Activated T-helper 2 cell treated with anti-CD3 and anti-CD28 coated beads, Interferon-gamma antibody, Interleukin-2, Interleukin-4, amounts not matched to agents 10 μg/mL and 5 μg/mL and 100 μg/mL, durations not matched to agents 14 hours and 24 hours and 36 hours (primary cell): ENCODE measurements at regions of chr4 and their contacts with region 1.

Region 1: GRCh38 chr4:145557720-145558119 is 61.5 kb upstream of the MMAA start:
- DNase-seq: peak; percentile 42
- H3K4me3 Mint-ChIP-seq: no peak overlapping the region
- H3K27ac Mint-ChIP-seq: no peak overlapping the region
- H3K4me1 Mint-ChIP-seq: peaks cover 1% of the 10 kb centered on the region
- H3K27me3 Mint-ChIP-seq: no peaks in the 10 kb centered on the region

Region 2: GRCh38 chr4:145216535-145216934 is 341.2 kb before region 1 on chr4:
- intact Hi-C with region 1: loop called (anchors 5 kb)
- DNase-seq: no peak
- H3K4me3 Mint-ChIP-seq: no peak overlapping the region
- H3K27ac Mint-ChIP-seq: no peak overlapping the region
- H3K4me1 Mint-ChIP-seq: no peaks in the 10 kb centered on the region
- H3K27me3 Mint-ChIP-seq: peaks cover 17% of the 10 kb centered on the region

Region 3: GRCh38 chr4:145234091-145234706 is 323.5 kb before region 1 on chr4:
- intact Hi-C with region 1: loop called (anchors 1 kb)
- DNase-seq: peak; percentile 14
- H3K4me3 Mint-ChIP-seq: no peak overlapping the region
- H3K27ac Mint-ChIP-seq: no peak overlapping the region
- H3K4me1 Mint-ChIP-seq: no peaks in the 10 kb centered on the region
- H3K27me3 Mint-ChIP-seq: peaks cover 17% of the 10 kb centered on the region

Region 4: GRCh38 chr4:145545538-145546174 is 12.1 kb before region 1 on chr4:
- intact Hi-C with region 1: no loop called
- DNase-seq: no peak
- H3K4me3 Mint-ChIP-seq: no peak overlapping the region
- H3K27ac Mint-ChIP-seq: no peak overlapping the region
- H3K4me1 Mint-ChIP-seq: peaks cover 1% of the 10 kb centered on the region
- H3K27me3 Mint-ChIP-seq: no peaks in the 10 kb centered on the region

Region 5: GRCh38 chr4:145609481-145610427 is 52.0 kb after region 1 on chr4:
- intact Hi-C with region 1: loop called (anchors 5 kb)
- DNase-seq: peak; percentile 44
- H3K4me3 Mint-ChIP-seq: no peak overlapping the region
- H3K27ac Mint-ChIP-seq: no peak overlapping the region
- H3K4me1 Mint-ChIP-seq: peaks cover 14% of the 10 kb centered on the region
- H3K27me3 Mint-ChIP-seq: peaks cover 7% of the 10 kb centered on the region